PC-3 (cell line): ENCODE measurements at regions of chr7 and their contacts with region 1.

Region 1: GRCh38 chr7:135558337-135558767 is 635 bp downstream of the NUP205 start:
- DNase-seq: peak; percentile 75
- ATAC-seq: peak; percentile 66
- H3K4me3 ChIP-seq: peak overlapping the region; percentile 93
- H3K27ac ChIP-seq: peak overlapping the region; percentile 83
- H3K4me1 ChIP-seq: peaks cover 6% of the 10 kb centered on the region
- H3K27me3 ChIP-seq: no peaks in the 10 kb centered on the region
- CTCF ChIP-seq: peak; percentile 78

Region 2: GRCh38 chr7:135414850-135415439 is 143.4 kb before region 1 on chr7:
- CTCF ChIA-PET with region 1: no interaction called
- POLR2A ChIA-PET with region 1: no interaction called
- intact Hi-C with region 1: loop called (anchors 5 kb)
- DNase-seq: peak; percentile 70
- ATAC-seq: peak; percentile 71
- H3K4me3 ChIP-seq: no peak overlapping the region
- H3K27ac ChIP-seq: no peak overlapping the region
- H3K4me1 ChIP-seq: no peaks in the 10 kb centered on the region
- H3K27me3 ChIP-seq: no peaks in the 10 kb centered on the region
- CTCF ChIP-seq: peak; percentile 74

Region 3: DNA sequence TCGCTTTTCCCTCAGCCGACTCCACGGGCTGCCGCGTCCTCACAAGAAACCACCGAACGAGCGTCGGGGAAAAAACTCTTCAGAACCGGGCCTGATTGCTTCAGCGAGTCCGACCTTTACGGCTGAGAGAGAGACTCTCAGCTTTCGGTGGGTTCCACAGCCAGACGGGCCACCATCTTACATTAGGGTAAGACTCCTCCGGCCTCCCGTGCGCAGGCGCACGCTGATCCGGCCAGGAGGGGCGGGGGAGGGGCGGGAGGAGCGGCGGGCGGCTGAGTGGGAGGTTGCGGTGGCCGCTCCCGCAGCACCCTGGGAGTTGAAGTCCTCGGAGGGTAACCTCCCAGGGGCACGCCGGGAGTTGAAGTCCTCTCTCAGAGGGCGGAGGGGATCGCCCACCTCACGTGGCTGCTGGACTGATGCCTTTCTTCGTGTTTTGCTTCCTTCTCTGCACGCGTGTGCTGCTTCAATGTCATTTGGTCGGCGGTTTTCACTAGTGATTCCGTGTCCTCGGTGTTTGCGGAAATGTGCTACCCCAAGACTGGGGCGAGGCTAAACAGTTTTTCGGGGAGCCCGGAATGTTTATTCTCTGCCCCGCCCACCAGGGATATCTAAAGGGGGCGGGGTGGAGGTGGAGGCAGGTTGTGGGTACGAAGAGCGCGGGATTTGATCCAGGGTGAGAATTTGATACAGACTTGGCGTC is 48.3 kb before region 1 on chr7 and contains the start of gene CNOT4:
- CTCF ChIA-PET with region 1: no interaction called
- POLR2A ChIA-PET with region 1: no interaction called
- intact Hi-C with region 1: loop called (anchors 1 kb)
- DNase-seq: peak; percentile 93
- ATAC-seq: peak; percentile 91
- H3K4me3 ChIP-seq: peak within 1 kb of the TSS; percentile 84
- H3K27ac ChIP-seq: peak within 1 kb of the TSS; percentile 53; the same call in 1 of the 2 replicates
- H3K4me1 ChIP-seq: peaks cover 22% of the 10 kb centered on the region
- H3K27me3 ChIP-seq: no peaks in the 10 kb centered on the region
- CTCF ChIP-seq: no peak
- total RNA-seq, gene CNOT4: 8.4 and 9.7 TPM in 2 replicates

Region 4: DNA sequence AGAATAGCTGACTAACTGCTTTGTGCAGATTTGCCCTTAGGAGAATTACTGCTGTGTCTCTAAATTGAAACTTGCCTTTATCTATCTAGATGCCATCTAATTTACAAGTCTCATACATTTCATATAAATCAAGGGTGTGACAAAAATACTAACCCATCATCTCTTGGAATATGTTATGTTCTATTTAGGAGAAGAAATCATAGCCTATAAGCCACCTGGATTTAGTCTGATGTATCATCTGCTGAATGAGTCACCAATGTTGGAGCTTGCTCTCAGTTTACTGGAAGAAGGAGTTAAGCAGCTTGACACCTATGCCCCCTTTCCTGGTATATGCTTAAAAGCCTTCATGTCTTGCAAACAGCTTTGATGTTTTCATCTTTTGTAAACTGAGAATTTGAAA is 42.8 kb after region 1 on chr7:
- CTCF ChIA-PET with region 1: no interaction called
- POLR2A ChIA-PET with region 1: no interaction called
- intact Hi-C with region 1: no loop called
- DNase-seq: no peak
- ATAC-seq: no peak
- H3K4me3 ChIP-seq: no peak overlapping the region
- H3K27ac ChIP-seq: no peak overlapping the region
- H3K4me1 ChIP-seq: no peaks in the 10 kb centered on the region
- H3K27me3 ChIP-seq: no peaks in the 10 kb centered on the region
- CTCF ChIP-seq: no peak